ENCODE measurements at regions of chr3 and their contacts with region 1.

Region 1: GRCh38 chr3:58013973-58014649 is 5.9 kb downstream of the FLNB start:
- DNase-seq: peak; percentile 55 to 79 (median 70)
- ATAC-seq: peak; percentile 45 to 62
- H3K4me3 ChIP-seq: no peak overlapping the region
- H3K27ac ChIP-seq: peak overlapping the region; percentile 50
- H3K4me1 ChIP-seq: peaks cover 9% of the 10 kb centered on the region
- H3K27me3 ChIP-seq: no peaks in the 10 kb centered on the region

Region 2: GRCh38 chr3:57951066-57951882 is 62.8 kb before region 1 on chr3:
- intact Hi-C with region 1: no loop called
- DNase-seq: peak; percentile 86 to 90 (median 89)
- ATAC-seq: peak; percentile 94 to 95
- H3K4me3 ChIP-seq: no peak overlapping the region
- H3K27ac ChIP-seq: peak overlapping the region; percentile 97
- H3K4me1 ChIP-seq: peaks cover 3% of the 10 kb centered on the region
- H3K27me3 ChIP-seq: no peaks in the 10 kb centered on the region

Region 3: GRCh38 chr3:58116161-58116955 is 102.2 kb after region 1 on chr3:
- intact Hi-C with region 1: loop called in 1 of 4 experiments (anchors 10 kb)
- DNase-seq: no peak
- ATAC-seq: no peak
- H3K4me3 ChIP-seq: no peak overlapping the region
- H3K27ac ChIP-seq: peak overlapping the region; percentile 15
- H3K4me1 ChIP-seq: peaks cover 28% of the 10 kb centered on the region
- H3K27me3 ChIP-seq: no peaks in the 10 kb centered on the region